CD8-positive, alpha-beta T cell (primary cell): ENCODE measurements at regions of chr6 and their contacts with region 1.

Region 1: GRCh38 chr6:115773741-115774140 is 286.9 kb downstream of the FRK start:
- DNase-seq: no peak
- ATAC-seq: no peak
- H3K4me3 ChIP-seq: no peak overlapping the region
- H3K4me3 Mint-ChIP-seq: no peak overlapping the region
- H3K27ac ChIP-seq: no peak overlapping the region
- H3K27ac Mint-ChIP-seq: no peak overlapping the region
- H3K4me1 ChIP-seq: no peaks in the 10 kb centered on the region
- H3K4me1 Mint-ChIP-seq: no peaks in the 10 kb centered on the region
- H3K27me3 ChIP-seq: no peaks in the 10 kb centered on the region
- H3K27me3 Mint-ChIP-seq: no peaks in the 10 kb centered on the region
- CTCF ChIP-seq: no peak

Region 2: GRCh38 chr6:115847671-115848070 is 73.9 kb after region 1 on chr6:
- CTCF ChIA-PET with region 1: no interaction called
- POLR2A ChIA-PET with region 1: no interaction called
- intact Hi-C with region 1: loop called in 1 of 2 experiments (anchors 2 kb)
- DNase-seq: no peak
- ATAC-seq: no peak
- H3K4me3 ChIP-seq: no peak overlapping the region
- H3K4me3 Mint-ChIP-seq: no peak overlapping the region
- H3K27ac ChIP-seq: no peak overlapping the region
- H3K27ac Mint-ChIP-seq: no peak overlapping the region
- H3K4me1 ChIP-seq: no peaks in the 10 kb centered on the region
- H3K4me1 Mint-ChIP-seq: no peaks in the 10 kb centered on the region
- H3K27me3 ChIP-seq: no peaks in the 10 kb centered on the region
- H3K27me3 Mint-ChIP-seq: no peaks in the 10 kb centered on the region
- CTCF ChIP-seq: no peak

Region 3: DNA sequence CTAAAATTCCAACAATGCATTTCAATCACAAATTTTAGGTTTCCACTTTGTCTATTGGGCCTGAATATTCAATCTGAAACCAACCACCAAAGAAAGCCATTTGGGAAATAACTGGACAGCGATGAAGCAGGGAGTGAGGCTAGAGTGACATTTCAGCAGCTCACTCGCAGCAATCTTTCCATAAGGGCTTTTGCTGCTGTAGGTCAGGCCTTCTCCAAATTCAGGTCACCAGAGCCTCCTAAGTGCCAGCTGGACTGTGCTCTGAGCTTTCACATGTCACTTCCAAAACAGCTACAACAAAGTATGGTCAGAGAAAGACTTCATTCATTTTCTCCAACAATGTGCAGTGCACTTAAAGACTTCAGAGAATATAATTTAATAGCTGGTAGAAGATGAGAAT is 92.2 kb after region 1 on chr6:
- CTCF ChIA-PET with region 1: no interaction called
- POLR2A ChIA-PET with region 1: no interaction called
- intact Hi-C with region 1: no loop called
- DNase-seq: no peak
- ATAC-seq: no peak
- H3K4me3 ChIP-seq: no peak overlapping the region
- H3K4me3 Mint-ChIP-seq: no peak overlapping the region
- H3K27ac ChIP-seq: no peak overlapping the region
- H3K27ac Mint-ChIP-seq: no peak overlapping the region
- H3K4me1 ChIP-seq: no peaks in the 10 kb centered on the region
- H3K4me1 Mint-ChIP-seq: no peaks in the 10 kb centered on the region
- H3K27me3 ChIP-seq: no peaks in the 10 kb centered on the region
- H3K27me3 Mint-ChIP-seq: no peaks in the 10 kb centered on the region
- CTCF ChIP-seq: no peak